CD8-positive, alpha-beta memory T cell (primary cell): ENCODE measurements at regions of chr11 and their contacts with region 1.

Region 1: DNA sequence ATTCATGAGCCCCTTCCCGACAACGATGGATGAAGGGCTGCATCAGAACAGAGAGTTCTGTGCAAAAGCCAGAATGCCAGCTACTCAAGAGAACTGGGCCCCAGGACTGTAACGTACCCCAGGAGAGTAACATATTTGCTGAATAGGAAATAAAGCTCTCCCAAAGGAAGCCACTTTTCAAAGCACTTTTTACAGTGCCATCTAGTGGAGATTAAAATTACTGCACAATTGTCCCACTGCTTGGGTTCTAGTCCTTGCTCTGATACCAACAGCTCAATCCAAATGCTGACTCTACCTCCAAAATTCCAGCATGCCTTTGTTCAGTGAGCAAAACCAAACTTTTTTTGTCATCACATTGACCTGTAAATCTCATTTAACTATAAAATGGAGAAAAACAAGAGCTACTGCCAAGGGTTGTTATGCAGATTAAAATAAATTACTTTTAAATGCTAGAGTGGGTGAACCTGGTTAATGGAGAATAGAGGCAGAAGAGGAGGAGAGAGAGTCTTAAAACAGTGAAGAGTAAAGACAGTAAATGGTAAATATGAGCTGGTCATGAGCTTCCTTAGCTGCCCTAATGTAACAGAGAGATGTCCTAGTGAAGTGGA is 87.6 kb upstream of the FSHB start:
- DNase-seq: peak in 1 of 5 donors; percentile 3
- H3K4me3 ChIP-seq: no peak overlapping the region
- H3K4me3 Mint-ChIP-seq: no peak overlapping the region
- H3K27ac ChIP-seq: no peak overlapping the region
- H3K27ac Mint-ChIP-seq: no peak overlapping the region
- H3K4me1 ChIP-seq: no peaks in the 10 kb centered on the region
- H3K4me1 Mint-ChIP-seq: no peaks in the 10 kb centered on the region
- H3K27me3 ChIP-seq: no peaks in the 10 kb centered on the region
- H3K27me3 Mint-ChIP-seq: peaks cover 3 to 11% of the 10 kb centered on the region in 2 donors

Region 2: DNA sequence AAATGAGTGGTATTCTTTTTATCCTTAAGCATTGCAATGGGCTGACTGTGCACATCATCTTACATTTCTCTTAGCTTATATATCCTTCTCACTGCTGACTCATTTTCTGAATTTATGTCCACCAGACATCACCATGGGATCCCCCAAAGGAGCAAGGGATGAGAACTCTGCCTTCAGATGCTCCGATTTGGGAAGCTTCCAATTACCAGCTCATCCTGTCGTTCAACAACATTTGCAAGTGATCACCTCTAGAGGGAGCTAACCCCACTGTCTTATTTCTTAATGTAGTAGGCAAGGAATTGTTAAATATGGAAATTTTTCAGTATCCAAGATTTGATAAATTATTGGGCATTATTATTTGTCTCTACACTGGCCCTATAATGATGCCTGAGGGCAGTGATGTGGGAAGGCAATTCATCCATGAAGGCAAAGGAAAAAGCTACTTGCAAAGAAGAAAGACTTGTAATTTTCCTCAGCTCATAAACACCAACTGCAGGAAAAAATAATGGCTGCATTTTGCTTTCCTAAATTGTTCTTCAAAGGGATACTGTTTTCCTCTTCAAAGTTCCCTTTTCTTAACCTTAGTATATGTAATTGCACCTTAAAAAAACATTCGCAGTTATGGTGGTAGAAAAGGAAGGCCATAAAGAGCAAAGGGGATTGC is 14.8 kb before region 1 on chr11:
- CTCF ChIA-PET with region 1: interaction called, 14 read pairs
- POLR2A ChIA-PET with region 1: no interaction called
- DNase-seq: peak in 1 of 5 donors; percentile 1
- H3K4me3 ChIP-seq: no peak overlapping the region
- H3K4me3 Mint-ChIP-seq: peak overlapping the region in 1 of 7 donors; percentile 78
- H3K27ac ChIP-seq: no peak overlapping the region
- H3K27ac Mint-ChIP-seq: no peak overlapping the region
- H3K4me1 ChIP-seq: no peaks in the 10 kb centered on the region
- H3K4me1 Mint-ChIP-seq: no peaks in the 10 kb centered on the region
- H3K27me3 ChIP-seq: no peaks in the 10 kb centered on the region
- H3K27me3 Mint-ChIP-seq: no peaks in the 10 kb centered on the region